ENCODE measurements at regions of chr4 and their contacts with region 1.

Region 1: DNA sequence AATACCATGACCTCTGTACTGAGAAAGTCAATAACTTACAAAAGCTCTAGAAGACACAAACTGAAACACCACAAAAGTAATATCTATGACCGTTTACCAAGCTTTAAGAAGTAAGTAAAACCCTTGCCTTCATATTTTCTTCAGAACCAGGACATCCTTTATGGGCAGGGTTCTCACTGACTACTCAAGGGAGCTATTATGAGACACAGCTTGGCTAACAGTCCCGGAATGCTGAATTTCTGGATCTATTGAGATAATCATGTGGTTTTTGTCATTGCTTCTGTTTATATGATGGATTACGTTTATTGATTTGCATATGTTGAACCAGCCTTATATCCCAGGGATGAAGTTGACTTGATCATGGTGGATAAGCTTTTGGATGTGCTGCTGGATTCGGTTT is 19.9 kb upstream of the CDS1 start:
- DNase-seq: no peak
- H3K4me3 ChIP-seq: no peak overlapping the region
- H3K27ac ChIP-seq: no peak overlapping the region
- H3K4me1 ChIP-seq: peaks cover 3 to 11% (median 8%) of the 10 kb centered on the region in 4 experiments; a peak in 4 of 7 replicates
- H3K27me3 ChIP-seq: no peaks in the 10 kb centered on the region
- CTCF ChIP-seq: no peak
- EP300 ChIP-seq: no peak
- POLR2A ChIP-seq: no peak
- RAD21 ChIP-seq: no peak

Region 2: GRCh38 chr4:84573385-84574068 is 10.5 kb after region 1 on chr4:
- CTCF ChIA-PET with region 1: interaction called, 27 read pairs
- POLR2A ChIA-PET with region 1: interaction called, 5 read pairs
- DNase-seq: no peak
- H3K4me3 ChIP-seq: no peak overlapping the region
- H3K27ac ChIP-seq: no peak overlapping the region
- H3K4me1 ChIP-seq: peaks cover 0 to 6% (median 4%) of the 10 kb centered on the region in 4 experiments; a peak in 6 of 7 replicates
- H3K27me3 ChIP-seq: no peaks in the 10 kb centered on the region
- CTCF ChIP-seq: no peak
- EP300 ChIP-seq: no peak
- POLR2A ChIP-seq: no peak
- RAD21 ChIP-seq: no peak

Measured in H1 (cell line).